Sigmoid colon (tissue), 7 donors: ENCODE measurements at regions of chr4 and their contacts with region 1.

Region 1: GRCh38 chr4:51842554-51843308 is at the start of gene DCUN1D4:
- DNase-seq: peak; percentile 100
- H3K4me3 ChIP-seq: peak within 1 kb of the TSS; percentile 76 to 98 (median 94)
- H3K27ac ChIP-seq: peak within 1 kb of the TSS; percentile 99
- H3K4me1 ChIP-seq: peaks cover 0 to 29% (median 20%) of the 10 kb centered on the region in 4 donors
- H3K27me3 ChIP-seq: no peaks in the 10 kb centered on the region
- CTCF ChIP-seq: peak in 1 of 4 experiments; percentile 37
- EP300 ChIP-seq: no peak
- POLR2A ChIP-seq: peak; percentile 71 to 72
- total RNA-seq, gene DCUN1D4: 48.6 to 76.2 (median 62.3) TPM

Region 2: GRCh38 chr4:51895813-51896408 is 53.2 kb after region 1 on chr4:
- intact Hi-C with region 1: loop called (anchors 5 kb)
- DNase-seq: peak; percentile 78
- H3K4me3 ChIP-seq: no peak overlapping the region
- H3K27ac ChIP-seq: peak overlapping the region; percentile 20 to 61 (median 43)
- H3K4me1 ChIP-seq: peaks cover 0 to 20% (median 3%) of the 10 kb centered on the region in 4 donors
- H3K27me3 ChIP-seq: no peaks in the 10 kb centered on the region
- CTCF ChIP-seq: peak; percentile 56 to 75 (median 72)
- EP300 ChIP-seq: no peak
- POLR2A ChIP-seq: no peak

Region 3: GRCh38 chr4:51918251-51918650 is 75.5 kb after region 1 on chr4:
- intact Hi-C with region 1: no loop called
- DNase-seq: no peak
- H3K4me3 ChIP-seq: no peak overlapping the region
- H3K27ac ChIP-seq: no peak overlapping the region
- H3K4me1 ChIP-seq: no peaks in the 10 kb centered on the region
- H3K27me3 ChIP-seq: no peaks in the 10 kb centered on the region
- CTCF ChIP-seq: no peak
- EP300 ChIP-seq: no peak
- POLR2A ChIP-seq: no peak

Region 4: DNA sequence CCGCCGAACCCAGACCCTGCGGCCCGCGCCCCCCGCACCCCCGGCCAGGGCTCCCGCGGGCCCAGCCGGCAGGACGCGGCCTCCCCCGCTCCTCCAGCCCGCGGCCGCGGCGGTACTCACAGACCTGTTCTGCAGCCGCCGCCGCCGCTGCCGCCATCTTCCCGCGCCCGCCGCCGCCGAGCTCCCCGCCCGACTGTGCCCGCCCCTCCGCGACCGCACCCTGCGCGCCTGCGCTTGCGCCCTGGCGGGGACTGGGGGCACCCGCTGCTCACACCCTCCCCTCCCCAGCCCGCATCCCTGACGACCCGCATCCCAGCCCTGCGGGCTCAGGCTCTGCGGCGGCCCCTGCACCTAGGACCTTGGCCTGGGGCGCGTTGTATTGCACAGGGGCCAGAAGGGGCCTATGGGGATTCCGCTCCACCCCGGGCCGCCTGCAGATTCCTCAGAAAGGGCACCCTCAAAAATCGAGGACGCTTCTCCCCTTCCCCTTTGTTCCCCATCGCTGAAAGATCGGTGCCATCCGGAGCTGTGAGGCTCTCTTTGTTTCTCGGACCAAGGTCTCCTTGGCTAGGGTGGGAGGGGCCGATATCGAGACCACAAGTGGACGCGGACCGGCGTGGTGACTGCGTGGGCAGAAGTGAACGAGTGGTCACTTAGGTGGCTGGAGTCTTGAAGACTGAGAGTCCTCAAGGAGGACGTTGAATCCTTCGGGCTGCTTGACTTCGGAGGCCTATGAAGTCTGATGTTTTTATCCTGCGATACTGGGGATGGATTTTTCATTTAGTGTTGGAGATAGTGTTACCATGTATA is 195.6 kb after region 1 on chr4 and contains the start of gene SGCB:
- intact Hi-C with region 1: loop called (anchors 2 kb)
- DNase-seq: peak; percentile 78
- H3K4me3 ChIP-seq: peak within 1 kb of the TSS; percentile 48 to 92 (median 86)
- H3K27ac ChIP-seq: peak within 1 kb of the TSS; percentile 79 to 90 (median 83)
- H3K4me1 ChIP-seq: peaks cover 0 to 35% (median 22%) of the 10 kb centered on the region in 4 donors
- H3K27me3 ChIP-seq: no peaks in the 10 kb centered on the region
- CTCF ChIP-seq: peak in 1 of 4 experiments; percentile 5
- EP300 ChIP-seq: no peak
- POLR2A ChIP-seq: no peak
- total RNA-seq, gene SGCB: 57.7 to 92.7 (median 78.0) TPM

Region 5: GRCh38 chr4:52721968-52722815 is 879.5 kb after region 1 on chr4:
- intact Hi-C with region 1: loop called (anchors 10 kb)
- DNase-seq: peak; percentile 97
- H3K4me3 ChIP-seq: peak overlapping the region; percentile 79 to 88 (median 82)
- H3K27ac ChIP-seq: peak overlapping the region; percentile 88 to 92 (median 90)
- H3K4me1 ChIP-seq: peaks cover 0 to 14% (median 3%) of the 10 kb centered on the region in 4 donors
- H3K27me3 ChIP-seq: no peaks in the 10 kb centered on the region
- CTCF ChIP-seq: no peak
- EP300 ChIP-seq: no peak
- POLR2A ChIP-seq: peak; percentile 64 to 76

Region 6: DNA sequence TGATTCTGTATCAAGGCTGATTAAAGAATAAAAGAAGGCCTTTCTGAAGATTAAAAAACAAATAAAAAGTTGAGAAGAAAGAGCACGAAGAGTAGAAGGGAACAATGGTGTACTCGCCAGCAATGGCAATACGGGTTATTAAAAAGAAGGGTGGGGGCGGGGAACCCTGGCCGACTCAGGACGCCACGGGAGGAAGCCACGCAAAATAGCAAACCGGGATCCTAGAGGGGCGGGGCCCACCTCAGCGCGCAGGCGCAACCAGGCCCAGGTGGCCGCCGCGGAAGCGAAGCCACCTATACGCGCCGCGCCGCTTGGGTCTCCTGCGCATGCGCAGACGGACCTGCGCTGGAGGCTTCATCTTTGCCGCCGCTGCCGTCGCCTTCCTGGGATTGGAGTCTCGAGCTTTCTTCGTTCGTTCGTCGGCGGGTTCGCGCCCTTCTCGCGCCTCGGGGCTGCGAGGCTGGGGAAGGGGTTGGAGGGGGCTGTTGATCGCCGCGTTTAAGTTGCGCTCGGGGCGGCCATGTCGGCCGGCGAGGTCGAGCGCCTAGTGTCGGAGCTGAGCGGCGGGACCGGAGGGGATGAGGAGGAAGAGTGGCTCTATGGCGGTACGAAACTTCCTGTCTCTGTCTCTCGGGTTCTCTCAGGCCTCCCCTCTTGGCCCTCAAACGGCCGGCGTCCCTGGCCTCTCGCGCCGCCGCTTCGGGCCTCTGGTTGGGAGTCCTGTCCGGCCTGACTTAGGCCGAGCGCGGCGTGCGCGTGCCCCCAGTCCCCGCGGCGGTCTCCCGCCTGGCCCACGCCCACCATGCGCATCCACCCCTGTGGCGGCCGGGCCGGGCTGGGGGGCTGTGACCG is 1534.8 kb after region 1 on chr4 and contains the start of gene FIP1L1:
- intact Hi-C with region 1: loop called (anchors 5 kb)
- DNase-seq: peak; percentile 97
- H3K4me3 ChIP-seq: peak within 1 kb of the TSS; percentile 81 to 94 (median 88)
- H3K27ac ChIP-seq: peak within 1 kb of the TSS; percentile 84 to 90 (median 88)
- H3K4me1 ChIP-seq: peaks cover 0 to 26% (median 16%) of the 10 kb centered on the region in 4 donors
- H3K27me3 ChIP-seq: no peaks in the 10 kb centered on the region
- CTCF ChIP-seq: no peak
- EP300 ChIP-seq: no peak
- POLR2A ChIP-seq: peak; percentile 68 to 79
- total RNA-seq, gene FIP1L1: 33.7 to 47.7 (median 43.7) TPM

Region 7: DNA sequence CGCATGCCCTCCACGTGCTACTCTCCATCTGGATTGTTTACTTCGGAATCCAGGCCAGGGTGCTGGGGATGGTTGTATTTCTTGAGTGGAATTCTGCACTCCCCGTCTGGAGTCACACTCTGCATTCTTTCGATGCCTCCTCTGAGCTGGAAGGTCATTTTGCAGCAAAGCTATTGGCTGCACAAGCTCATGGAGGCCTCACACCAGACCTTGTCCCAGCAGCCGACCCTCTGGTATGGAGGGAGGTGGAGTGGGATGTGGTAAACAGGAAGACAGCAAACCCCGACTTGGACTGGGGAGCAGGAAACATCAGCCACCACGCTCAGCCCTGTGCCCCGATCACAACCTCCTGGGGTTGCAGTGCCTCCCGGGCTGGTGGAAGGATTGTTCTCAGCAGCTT is 1973.8 kb after region 1 on chr4:
- intact Hi-C with region 1: loop called (anchors 5 kb)
- DNase-seq: no peak
- H3K4me3 ChIP-seq: no peak overlapping the region
- H3K27ac ChIP-seq: no peak overlapping the region
- H3K4me1 ChIP-seq: peaks cover 3 to 37% (median 29%) of the 10 kb centered on the region in 4 donors
- H3K27me3 ChIP-seq: no peaks in the 10 kb centered on the region
- CTCF ChIP-seq: no peak
- EP300 ChIP-seq: no peak
- POLR2A ChIP-seq: no peak